ENCODE measurements at regions of chr5 and their contacts with region 1.

Region 1: GRCh38 chr5:129852747-129853352 is 51.4 kb upstream of the CHSY3 start:
- DNase-seq: peak; percentile 27 to 73 (median 61)
- ATAC-seq: peak; percentile 48
- H3K4me3 ChIP-seq: no peak overlapping the region
- H3K4me3 Mint-ChIP-seq: no peak overlapping the region
- H3K27ac ChIP-seq: no peak overlapping the region
- H3K27ac Mint-ChIP-seq: no peak overlapping the region
- H3K4me1 ChIP-seq: no peaks in the 10 kb centered on the region
- H3K4me1 Mint-ChIP-seq: no peaks in the 10 kb centered on the region
- H3K27me3 ChIP-seq: no peaks in the 10 kb centered on the region
- H3K27me3 Mint-ChIP-seq: peaks cover 8% of the 10 kb centered on the region
- CTCF ChIP-seq: peak; percentile 95

Region 2: GRCh38 chr5:129345213-129345924 is 507.5 kb before region 1 on chr5:
- CTCF ChIA-PET with region 1: no interaction called
- POLR2A ChIA-PET with region 1: no interaction called
- intact Hi-C with region 1: no loop called
- DNase-seq: no peak
- ATAC-seq: no peak
- H3K4me3 ChIP-seq: no peak overlapping the region
- H3K4me3 Mint-ChIP-seq: no peak overlapping the region
- H3K27ac ChIP-seq: no peak overlapping the region
- H3K27ac Mint-ChIP-seq: no peak overlapping the region
- H3K4me1 ChIP-seq: no peaks in the 10 kb centered on the region
- H3K4me1 Mint-ChIP-seq: no peaks in the 10 kb centered on the region
- H3K27me3 ChIP-seq: no peaks in the 10 kb centered on the region
- H3K27me3 Mint-ChIP-seq: no peaks in the 10 kb centered on the region
- CTCF ChIP-seq: no peak

Region 3: GRCh38 chr5:129767906-129768380 is 84.9 kb before region 1 on chr5:
- CTCF ChIA-PET with region 1: interaction called, 19 read pairs
- POLR2A ChIA-PET with region 1: no interaction called
- intact Hi-C with region 1: no loop called
- DNase-seq: peak in 8 of 9 experiments; percentile 1 to 75 (median 42)
- ATAC-seq: peak; percentile 64
- H3K4me3 ChIP-seq: no peak overlapping the region
- H3K4me3 Mint-ChIP-seq: no peak overlapping the region
- H3K27ac ChIP-seq: no peak overlapping the region
- H3K27ac Mint-ChIP-seq: no peak overlapping the region
- H3K4me1 ChIP-seq: no peaks in the 10 kb centered on the region
- H3K4me1 Mint-ChIP-seq: peaks cover 2% of the 10 kb centered on the region
- H3K27me3 ChIP-seq: no peaks in the 10 kb centered on the region
- H3K27me3 Mint-ChIP-seq: peaks cover 6% of the 10 kb centered on the region
- CTCF ChIP-seq: peak; percentile 90